ENCODE measurements at regions of chr11 and their contacts with region 1.

Region 1: GRCh38 chr11:64304316-64305072 is 830 bp upstream of the ESRRA start:
- DNase-seq: peak; percentile 99
- ATAC-seq: peak; percentile 38
- H3K4me3 Mint-ChIP-seq: peak overlapping the region; percentile 89
- H3K27ac Mint-ChIP-seq: peak overlapping the region; percentile 97
- H3K4me1 Mint-ChIP-seq: peaks cover 29% of the 10 kb centered on the region
- H3K27me3 Mint-ChIP-seq: peaks cover 18% of the 10 kb centered on the region
- CTCF ChIP-seq: peak; percentile 87

Region 2: DNA sequence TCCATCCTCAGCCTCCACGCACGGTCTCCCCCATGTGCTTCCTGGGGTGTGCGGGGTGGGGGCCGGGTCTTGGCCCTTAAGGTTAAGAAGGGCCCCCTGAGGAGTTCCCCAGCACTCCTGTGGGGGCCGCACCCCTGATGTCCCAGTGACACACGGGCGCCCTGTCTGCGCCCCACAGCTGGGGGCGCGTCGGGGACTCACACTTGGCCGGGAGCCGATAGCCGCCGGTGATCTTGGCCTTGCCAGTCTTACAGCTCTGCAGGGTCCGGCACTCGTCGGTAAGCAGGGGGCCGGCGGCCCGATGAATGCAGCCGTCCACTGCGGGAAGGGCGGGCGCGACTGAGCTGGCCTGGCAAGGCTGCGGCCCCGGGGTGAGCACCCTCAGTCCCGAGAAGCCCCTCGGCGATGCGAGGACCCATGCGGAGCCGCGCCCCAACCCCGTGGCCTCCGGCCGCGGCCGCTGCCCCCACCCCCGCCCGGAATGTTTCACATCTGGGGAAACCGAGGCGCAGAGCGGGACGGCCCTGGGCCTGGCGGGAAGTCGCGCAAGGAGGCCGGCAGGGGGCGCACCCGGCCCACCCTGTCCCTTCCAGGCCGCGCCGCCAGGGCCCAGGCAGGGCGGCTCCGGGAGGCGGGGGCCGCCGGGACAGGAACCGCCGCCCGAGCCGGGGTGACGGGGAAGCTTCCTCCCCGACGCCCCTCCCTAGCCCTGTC is 304.3 kb before region 1 on chr11:
- CTCF ChIA-PET with region 1: interaction called, 11 read pairs
- POLR2A ChIA-PET with region 1: no interaction called
- intact Hi-C with region 1: no loop called
- DNase-seq: peak; percentile 76
- ATAC-seq: peak; percentile 77
- H3K4me3 Mint-ChIP-seq: peak overlapping the region; percentile 15
- H3K27ac Mint-ChIP-seq: no peak overlapping the region
- H3K4me1 Mint-ChIP-seq: peaks cover 6% of the 10 kb centered on the region
- H3K27me3 Mint-ChIP-seq: peaks cover 4% of the 10 kb centered on the region
- CTCF ChIP-seq: peak; percentile 87

Region 3: GRCh38 chr11:64225612-64226506 is 78.6 kb before region 1 on chr11 and contains the starts of genes NUDT22 and TRPT1:
- CTCF ChIA-PET with region 1: interaction called, 11 read pairs
- POLR2A ChIA-PET with region 1: interaction called, 5 read pairs
- intact Hi-C with region 1: no loop called
- DNase-seq: peak; percentile 94
- ATAC-seq: peak; percentile 71
- H3K4me3 Mint-ChIP-seq: peak within 1 kb of the TSS; percentile 89
- H3K27ac Mint-ChIP-seq: peak within 1 kb of the TSS; percentile 87
- H3K4me1 Mint-ChIP-seq: peaks cover 30% of the 10 kb centered on the region
- H3K27me3 Mint-ChIP-seq: no peaks in the 10 kb centered on the region
- CTCF ChIP-seq: peak; percentile 42
- total RNA-seq, gene NUDT22: 66.0 to 69.2 TPM
- total RNA-seq, gene TRPT1: 33.7 to 41.5 TPM

Region 4: GRCh38 chr11:64246871-64247728 is 57.4 kb before region 1 on chr11 and contains the start of gene PPP1R14B:
- CTCF ChIA-PET with region 1: interaction called, 35 read pairs
- POLR2A ChIA-PET with region 1: interaction called, 10 read pairs
- intact Hi-C with region 1: loop called (anchors 10 kb)
- DNase-seq: peak; percentile 89
- ATAC-seq: peak; percentile 55
- H3K4me3 Mint-ChIP-seq: peak within 1 kb of the TSS; percentile 94
- H3K27ac Mint-ChIP-seq: peak within 1 kb of the TSS; percentile 93
- H3K4me1 Mint-ChIP-seq: peaks cover 33% of the 10 kb centered on the region
- H3K27me3 Mint-ChIP-seq: no peaks in the 10 kb centered on the region
- CTCF ChIP-seq: no peak
- total RNA-seq, gene PPP1R14B: 285 to 287 TPM

Region 5: GRCh38 chr11:64276653-64277431 is 27.7 kb before region 1 on chr11:
- CTCF ChIA-PET with region 1: interaction called, 77 read pairs
- POLR2A ChIA-PET with region 1: interaction called, 35 read pairs
- intact Hi-C with region 1: no loop called
- DNase-seq: no peak
- ATAC-seq: no peak
- H3K4me3 Mint-ChIP-seq: no peak overlapping the region
- H3K27ac Mint-ChIP-seq: no peak overlapping the region
- H3K4me1 Mint-ChIP-seq: peaks cover 4% of the 10 kb centered on the region
- H3K27me3 Mint-ChIP-seq: no peaks in the 10 kb centered on the region
- CTCF ChIP-seq: no peak

Region 6: DNA sequence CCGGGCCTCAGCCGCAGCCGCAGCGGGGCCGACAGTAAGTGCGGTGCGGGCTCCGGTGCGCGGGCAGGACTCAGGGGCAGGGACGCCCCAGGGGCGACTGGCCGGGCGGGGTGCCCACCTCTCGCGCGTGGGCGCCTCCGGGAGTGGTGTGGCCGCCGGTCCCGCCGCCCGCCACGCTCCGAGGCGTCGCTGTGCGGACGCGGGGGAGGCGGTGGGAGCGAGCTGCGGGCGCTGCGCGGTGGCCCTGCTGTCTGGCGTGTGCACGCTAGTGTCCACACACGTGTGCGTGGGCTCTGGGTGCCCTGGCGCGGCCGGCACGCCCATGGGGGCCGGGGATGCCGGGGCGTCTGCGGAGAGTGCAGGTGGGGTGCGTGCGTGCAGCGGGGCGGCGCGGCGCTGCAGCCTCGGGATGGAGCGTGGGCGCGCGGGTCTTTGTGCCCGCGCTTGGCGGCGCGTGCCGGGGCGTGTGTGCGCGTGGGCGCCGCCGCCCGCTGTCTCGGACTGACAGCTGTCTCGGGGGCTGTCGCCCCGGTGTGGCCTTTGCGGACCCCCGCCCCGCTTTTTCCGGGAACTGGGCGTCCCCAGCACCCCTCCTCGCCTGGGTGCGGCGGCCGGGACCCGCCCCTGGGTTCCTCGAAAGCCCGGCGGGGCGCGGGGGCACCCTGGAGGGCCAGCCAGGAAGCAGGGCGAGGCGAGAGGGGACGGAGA is 12.6 kb before region 1 on chr11:
- CTCF ChIA-PET with region 1: interaction called, 77 read pairs
- POLR2A ChIA-PET with region 1: interaction called, 7 read pairs
- intact Hi-C with region 1: no loop called
- DNase-seq: no peak
- ATAC-seq: peak; percentile 58
- H3K4me3 Mint-ChIP-seq: no peak overlapping the region
- H3K27ac Mint-ChIP-seq: no peak overlapping the region
- H3K4me1 Mint-ChIP-seq: peaks cover 4% of the 10 kb centered on the region
- H3K27me3 Mint-ChIP-seq: peaks cover 47% of the 10 kb centered on the region
- CTCF ChIP-seq: no peak

Region 7: GRCh38 chr11:64331557-64332371 is 27.3 kb after region 1 on chr11:
- CTCF ChIA-PET with region 1: interaction called, 14 read pairs
- POLR2A ChIA-PET with region 1: interaction called, 7 read pairs
- intact Hi-C with region 1: no loop called
- DNase-seq: peak; percentile 96
- ATAC-seq: peak; percentile 89
- H3K4me3 Mint-ChIP-seq: peak overlapping the region; percentile 0
- H3K27ac Mint-ChIP-seq: peak overlapping the region; percentile 75
- H3K4me1 Mint-ChIP-seq: peaks cover 24% of the 10 kb centered on the region
- H3K27me3 Mint-ChIP-seq: no peaks in the 10 kb centered on the region
- CTCF ChIP-seq: peak; percentile 67